Gastrocnemius medialis (tissue), 4 donors: ENCODE measurements at regions of chr11 and their contacts with region 1.

Region 1: DNA sequence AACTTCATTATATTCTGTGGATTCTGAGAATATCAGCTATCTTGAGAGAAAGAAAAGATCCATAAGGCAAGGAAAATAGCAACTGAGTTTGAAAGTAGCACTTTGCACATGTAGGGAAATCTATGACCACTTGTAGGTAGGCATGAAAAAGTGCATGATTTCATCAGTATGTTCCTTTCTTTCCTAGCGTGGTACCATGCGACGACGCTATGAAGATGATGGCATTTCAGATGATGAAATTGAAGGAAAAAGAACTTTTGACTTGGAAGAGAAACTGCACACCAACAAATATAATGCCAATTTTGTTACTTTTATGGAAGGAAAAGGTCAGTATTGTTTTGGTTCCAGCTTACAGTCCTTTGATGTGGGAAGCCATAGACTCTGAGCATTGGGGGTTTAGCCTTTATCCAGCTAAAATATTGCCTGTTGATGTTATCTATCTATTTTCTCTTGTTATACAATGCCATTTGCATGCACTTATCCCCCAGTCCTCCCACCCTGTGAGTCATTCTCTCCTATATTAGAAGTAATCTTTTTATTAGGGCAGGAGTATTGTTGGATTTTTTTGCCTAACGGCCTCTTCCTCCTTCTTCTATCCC is 60.9 kb downstream of the KDM2A start:
- DNase-seq: no peak
- ATAC-seq: no peak
- H3K4me3 ChIP-seq: no peak overlapping the region
- H3K27ac ChIP-seq: no peak overlapping the region
- H3K4me1 ChIP-seq: no peaks in the 10 kb centered on the region
- H3K27me3 ChIP-seq: no peaks in the 10 kb centered on the region
- CTCF ChIP-seq: no peak
- POLR2A ChIP-seq: no peak

Region 2: GRCh38 chr11:67136156-67136555 is 43.8 kb before region 1 on chr11:
- in situ Hi-C with region 1: no loop called
- intact Hi-C with region 1: no loop called
- DNase-seq: no peak
- ATAC-seq: no peak
- H3K4me3 ChIP-seq: no peak overlapping the region
- H3K27ac ChIP-seq: no peak overlapping the region
- H3K4me1 ChIP-seq: no peaks in the 10 kb centered on the region
- H3K27me3 ChIP-seq: no peaks in the 10 kb centered on the region
- CTCF ChIP-seq: no peak
- POLR2A ChIP-seq: no peak

Region 3: GRCh38 chr11:67213178-67213621 is 33.2 kb after region 1 on chr11:
- in situ Hi-C with region 1: no loop called
- intact Hi-C with region 1: loop called (anchors 5 kb)
- DNase-seq: no peak
- ATAC-seq: no peak
- H3K4me3 ChIP-seq: no peak overlapping the region
- H3K27ac ChIP-seq: no peak overlapping the region
- H3K4me1 ChIP-seq: no peaks in the 10 kb centered on the region
- H3K27me3 ChIP-seq: no peaks in the 10 kb centered on the region
- CTCF ChIP-seq: no peak
- POLR2A ChIP-seq: no peak

Region 4: DNA sequence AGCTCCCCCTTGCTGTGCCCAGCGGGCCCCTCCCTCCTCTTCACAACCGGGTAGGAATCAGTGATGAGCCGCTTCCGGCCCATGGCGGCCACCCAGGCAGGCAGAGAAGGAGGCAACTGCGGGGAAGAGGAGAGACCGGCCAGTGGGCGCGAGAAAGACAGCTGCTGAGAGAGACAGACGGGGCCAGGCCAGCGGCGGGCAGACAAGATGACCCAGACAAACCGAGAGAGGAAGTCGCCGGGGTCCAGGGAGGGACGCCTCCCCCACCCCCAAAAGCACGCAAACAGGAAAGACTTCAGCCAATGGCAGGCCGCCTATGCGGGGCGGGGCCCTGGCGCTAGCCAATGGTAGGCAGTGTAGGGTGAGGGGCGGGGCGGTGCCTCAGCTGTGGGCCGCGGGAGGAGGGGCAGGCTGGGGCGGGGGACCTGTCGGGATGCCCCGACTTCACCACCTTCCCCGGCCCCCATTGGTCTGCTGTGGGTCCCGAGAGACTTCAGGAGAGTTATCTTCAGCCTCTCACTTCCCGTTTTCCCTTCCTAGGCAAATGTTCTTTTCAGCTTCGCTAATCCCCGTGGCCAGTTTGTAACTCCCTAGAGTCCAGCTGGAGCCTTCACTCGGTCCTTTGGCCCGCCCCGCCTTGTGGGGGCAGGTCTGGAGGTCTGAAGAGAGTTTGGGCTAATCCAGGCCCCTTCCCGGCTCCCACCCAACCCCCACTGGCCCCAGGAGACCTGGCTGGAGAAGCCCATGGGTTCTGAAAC is 173.5 kb after region 1 on chr11 and contains the start of gene POLD4:
- in situ Hi-C with region 1: no loop called
- intact Hi-C with region 1: no loop called
- DNase-seq: peak; percentile 97 to 99
- ATAC-seq: peak; percentile 82 to 83
- H3K4me3 ChIP-seq: peak within 1 kb of the TSS; percentile 79 to 93 (median 84)
- H3K27ac ChIP-seq: peak within 1 kb of the TSS; percentile 94 to 100 (median 98)
- H3K4me1 ChIP-seq: peaks cover 39 to 48% of the 10 kb centered on the region in 2 donors
- H3K27me3 ChIP-seq: no peaks in the 10 kb centered on the region
- CTCF ChIP-seq: no peak
- POLR2A ChIP-seq: peak; percentile 87 to 90
- total RNA-seq, gene POLD4: 57.4 to 115 (median 87.9) TPM